ENCODE measurements at regions of chr19 and their contacts with region 1.

Region 1: DNA sequence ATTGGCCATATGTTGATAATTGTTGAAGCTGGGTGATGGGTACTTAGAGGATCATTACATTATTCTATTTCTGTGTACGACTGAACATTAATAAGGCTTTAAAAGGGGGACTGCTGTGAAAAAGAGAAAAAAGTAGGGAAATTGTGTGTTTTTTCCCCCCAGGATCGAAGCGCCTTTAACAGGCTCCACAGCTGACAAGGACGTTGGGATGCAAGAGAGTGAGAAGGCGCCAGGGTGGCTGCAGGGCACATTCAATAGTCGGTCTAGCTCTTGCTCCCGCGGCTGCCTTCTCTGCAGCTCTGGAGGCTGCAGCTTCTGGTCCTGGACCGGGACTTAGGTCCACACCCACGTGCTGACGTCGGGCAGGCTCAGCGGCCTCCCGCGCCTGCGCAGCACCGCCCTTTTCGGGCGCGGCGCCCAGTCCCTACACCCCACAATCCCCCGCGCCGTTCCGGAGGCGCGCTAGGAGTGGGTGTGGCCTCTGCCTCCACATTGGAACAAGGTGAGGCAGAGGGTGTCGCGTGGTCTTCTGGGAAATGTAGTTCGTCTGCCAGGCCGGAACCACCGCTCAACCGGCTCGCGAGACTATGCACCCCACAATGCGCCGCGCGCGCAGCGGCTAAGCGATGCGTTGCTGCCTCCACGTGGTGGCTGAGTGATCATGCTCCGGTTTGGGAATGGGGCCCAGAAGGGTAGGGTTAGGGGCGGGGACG is 4.9 kb upstream of the LRFN3 start:
- DNase-seq: peak; percentile 100
- ATAC-seq: peak; percentile 90 to 98
- H3K4me3 ChIP-seq: peak overlapping the region; percentile 39
- H3K27ac ChIP-seq: peak overlapping the region; percentile 75 to 79
- H3K4me1 ChIP-seq: peaks cover 15% of the 10 kb centered on the region
- CTCF ChIP-seq: peak; percentile 100
- EP300 ChIP-seq: no peak
- POLR2A ChIP-seq: peak; percentile 100
- RAD21 ChIP-seq: peak; percentile 100

Region 2: DNA sequence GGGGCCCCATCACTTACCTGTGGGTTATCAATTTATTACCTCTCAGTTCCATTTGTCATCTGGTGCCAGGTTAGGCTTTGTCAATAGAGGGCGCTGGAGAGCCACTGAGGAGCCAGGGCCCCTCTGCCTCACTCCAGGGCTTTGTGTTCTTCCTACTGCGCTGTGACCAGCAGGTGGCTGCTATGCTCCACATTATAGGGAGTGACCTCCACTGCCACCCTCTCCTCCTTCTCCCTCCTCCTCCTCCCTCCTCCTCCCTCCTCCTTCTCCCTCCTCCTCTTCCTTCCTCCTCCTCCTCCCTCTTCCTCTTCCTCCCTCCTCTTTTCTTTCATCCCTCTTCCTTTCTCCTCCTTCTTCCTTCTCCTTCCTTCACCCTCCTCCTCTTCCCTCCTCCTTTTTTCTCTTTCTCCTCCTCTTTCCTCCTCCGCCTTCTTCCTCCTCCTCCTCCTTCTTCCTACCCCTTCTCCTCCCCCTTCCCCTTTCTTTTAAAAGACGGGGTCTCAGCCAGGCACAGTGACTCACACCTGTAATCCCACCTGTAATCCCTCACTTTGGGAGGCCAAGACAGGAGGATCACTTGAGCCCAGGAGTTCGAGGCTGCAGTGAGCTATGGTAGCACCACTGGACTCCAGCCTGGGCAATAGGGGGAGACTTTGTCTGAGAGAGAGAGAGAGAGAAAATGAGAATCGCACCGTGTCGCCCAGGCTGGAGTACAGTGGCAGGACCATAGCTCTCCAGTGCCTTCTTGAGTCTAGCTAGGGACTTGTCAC is 237.3 kb before region 1 on chr19:
- CTCF ChIA-PET with region 1: interaction called, 10 read pairs
- POLR2A ChIA-PET with region 1: no interaction called
- DNase-seq: peak; percentile 95 to 97
- ATAC-seq: peak; percentile 99
- H3K4me3 ChIP-seq: no peak overlapping the region
- H3K27ac ChIP-seq: 0 out of 6 replicates have a peak overlapping the region, but pooled peaks of 1 of the 2 experiments have one; percentile 4
- H3K4me1 ChIP-seq: no peaks in the 10 kb centered on the region
- CTCF ChIP-seq: peak; percentile 100
- EP300 ChIP-seq: no peak
- POLR2A ChIP-seq: no peak
- RAD21 ChIP-seq: peak; percentile 99 to 100

Region 3: GRCh38 chr19:35716801-35717666 is 214.3 kb before region 1 on chr19:
- CTCF ChIA-PET with region 1: interaction called, 11 read pairs
- POLR2A ChIA-PET with region 1: no interaction called
- DNase-seq: peak; percentile 95 to 99
- ATAC-seq: peak; percentile 74 to 91
- H3K4me3 ChIP-seq: peak overlapping the region; percentile 87
- H3K27ac ChIP-seq: peak overlapping the region; percentile 91 to 98
- H3K4me1 ChIP-seq: peaks cover 20% of the 10 kb centered on the region
- CTCF ChIP-seq: peak; percentile 100
- EP300 ChIP-seq: no peak
- POLR2A ChIP-seq: peak; percentile 74
- RAD21 ChIP-seq: peak; percentile 89 to 99

Region 4: GRCh38 chr19:35869327-35870123 is 61.8 kb before region 1 on chr19:
- CTCF ChIA-PET with region 1: interaction called, 39 read pairs
- POLR2A ChIA-PET with region 1: interaction called, 3 read pairs
- DNase-seq: peak; percentile 94 to 98
- ATAC-seq: peak; percentile 70 to 88
- H3K4me3 ChIP-seq: peak overlapping the region; percentile 59
- H3K27ac ChIP-seq: peak overlapping the region; percentile 53 to 80
- H3K4me1 ChIP-seq: peaks cover 19% of the 10 kb centered on the region
- CTCF ChIP-seq: no peak
- EP300 ChIP-seq: no peak
- POLR2A ChIP-seq: peak; percentile 30; the same call in 1 of the 2 replicates
- RAD21 ChIP-seq: no peak

Region 5: DNA sequence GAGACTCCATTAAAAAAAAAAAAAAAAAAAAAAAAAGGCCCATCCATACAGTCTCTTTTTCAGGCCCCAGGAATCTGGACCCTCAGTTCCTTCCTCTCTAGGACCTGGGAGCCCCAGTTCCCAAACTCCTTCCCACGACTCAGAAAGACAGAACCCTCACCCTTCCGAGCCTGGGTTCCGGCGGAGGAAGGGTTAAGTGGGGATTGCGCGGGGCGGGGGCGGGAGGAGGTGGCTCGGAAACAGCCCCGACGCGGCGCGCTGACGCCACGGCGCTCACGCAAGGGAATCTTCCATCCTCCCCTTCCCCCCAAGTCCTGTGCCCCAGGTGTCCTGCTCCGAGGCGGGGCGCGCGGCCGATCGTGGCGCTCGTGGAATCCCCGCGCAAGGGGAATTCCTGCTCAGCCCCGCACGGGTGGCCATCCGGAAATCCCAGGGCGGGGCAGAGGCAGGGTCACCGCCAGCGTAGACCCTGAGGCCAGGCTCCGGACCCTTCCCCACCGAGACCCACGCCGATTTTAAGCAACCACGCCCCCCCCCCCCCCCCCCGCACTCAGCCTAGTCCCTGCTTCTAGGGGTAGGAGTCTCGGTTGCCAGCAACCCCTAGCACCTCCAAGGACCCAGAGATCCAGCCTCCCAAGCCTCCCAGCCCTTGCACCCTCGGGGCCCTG is 31.6 kb before region 1 on chr19:
- CTCF ChIA-PET with region 1: interaction called, 402 read pairs
- POLR2A ChIA-PET with region 1: interaction called, 14 read pairs
- DNase-seq: peak; percentile 93 to 98
- ATAC-seq: peak; percentile 85 to 88
- H3K4me3 ChIP-seq: peak overlapping the region; percentile 84
- H3K27ac ChIP-seq: peak overlapping the region; percentile 80 to 89
- H3K4me1 ChIP-seq: peaks cover 26% of the 10 kb centered on the region
- CTCF ChIP-seq: no peak
- EP300 ChIP-seq: no peak; a peak in 1 of 5 replicates
- POLR2A ChIP-seq: peak; percentile 77
- RAD21 ChIP-seq: no peak

Region 6: DNA sequence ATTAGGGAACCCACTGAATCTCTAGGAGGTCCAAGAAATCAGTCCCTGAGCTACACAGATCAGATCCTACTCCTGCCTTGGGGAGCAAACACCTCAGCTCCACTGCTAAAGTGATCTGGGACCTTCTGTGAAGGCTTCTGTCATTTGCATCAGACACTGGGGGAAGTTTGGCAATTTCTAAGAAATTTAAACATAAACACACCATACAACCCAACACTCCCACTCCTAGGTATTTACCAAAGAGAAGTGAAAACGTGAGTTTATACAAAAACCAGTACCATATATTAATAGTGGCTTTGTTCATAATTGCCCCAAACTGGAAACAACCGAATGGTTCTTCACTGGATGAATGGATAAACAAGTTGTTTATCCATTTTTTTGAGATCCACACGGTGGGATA is 15.9 kb before region 1 on chr19:
- CTCF ChIA-PET with region 1: interaction called, 29 read pairs
- POLR2A ChIA-PET with region 1: interaction called, 5 read pairs
- DNase-seq: no peak
- ATAC-seq: no peak; a peak in 1 of 6 replicates
- H3K4me3 ChIP-seq: no peak overlapping the region
- H3K27ac ChIP-seq: no peak overlapping the region
- H3K4me1 ChIP-seq: no peaks in the 10 kb centered on the region; the same call in 2 of the 3 replicates
- CTCF ChIP-seq: no peak
- EP300 ChIP-seq: no peak
- POLR2A ChIP-seq: no peak
- RAD21 ChIP-seq: no peak

Region 7: GRCh38 chr19:35959040-35959967 is 28.0 kb after region 1 on chr19:
- CTCF ChIA-PET with region 1: interaction called, 17 read pairs
- POLR2A ChIA-PET with region 1: no interaction called
- DNase-seq: no peak
- ATAC-seq: peak; percentile 68 to 80
- H3K4me3 ChIP-seq: peak overlapping the region; percentile 21; the same call in 2 of the 3 replicates
- H3K27ac ChIP-seq: no peak overlapping the region
- H3K4me1 ChIP-seq: peaks cover 7% of the 10 kb centered on the region; the same call in 2 of the 3 replicates
- CTCF ChIP-seq: peak; percentile 43
- EP300 ChIP-seq: no peak
- POLR2A ChIP-seq: no peak
- RAD21 ChIP-seq: peak in 1 of 2 experiments; percentile 20; a peak in 1 of 5 replicates

Region 8: GRCh38 chr19:36023432-36023831 is 92.1 kb after region 1 on chr19:
- CTCF ChIA-PET with region 1: no interaction called
- POLR2A ChIA-PET with region 1: no interaction called
- DNase-seq: no peak
- ATAC-seq: no peak
- H3K4me3 ChIP-seq: no peak overlapping the region
- H3K27ac ChIP-seq: no peak overlapping the region
- H3K4me1 ChIP-seq: no peaks in the 10 kb centered on the region
- CTCF ChIP-seq: no peak
- EP300 ChIP-seq: no peak
- POLR2A ChIP-seq: no peak
- RAD21 ChIP-seq: no peak

Measured in A549 (cell line).